ENCODE measurements at regions of chr6 and their contacts with region 1.

Region 1: DNA sequence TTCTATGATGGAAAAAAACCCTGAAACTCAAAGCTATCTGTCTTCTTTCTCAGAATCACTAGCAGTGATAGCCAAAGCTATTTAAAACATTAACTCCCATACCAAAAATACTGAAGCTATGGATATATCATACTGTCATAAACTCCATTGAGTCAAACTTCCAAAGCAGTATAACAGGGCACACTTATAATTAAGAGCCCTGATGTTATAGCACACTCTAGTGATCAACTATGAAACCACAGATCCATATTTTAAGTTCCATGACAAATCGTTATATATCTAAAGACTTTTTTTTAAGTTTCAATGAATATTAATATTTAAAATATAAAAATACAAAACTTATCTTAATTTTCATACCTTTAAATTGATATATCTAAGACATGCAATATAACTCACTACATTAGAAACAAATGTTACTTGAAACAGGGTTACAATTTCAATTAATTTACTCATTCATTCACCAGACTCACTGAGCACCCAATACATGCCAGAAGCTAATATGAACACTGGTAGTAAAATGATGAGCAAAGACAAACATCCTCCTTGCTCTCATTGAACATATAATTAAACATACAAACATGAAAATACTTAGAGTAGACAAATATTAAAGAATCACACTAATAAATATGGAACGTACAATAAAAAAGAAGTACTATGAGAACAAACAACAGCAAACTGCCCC is 69.3 kb downstream of the IBTK start:
- DNase-seq: no peak
- ATAC-seq: peak; percentile 50; the same call in 1 of the 2 replicates
- H3K4me3 ChIP-seq: no peak overlapping the region
- H3K27ac ChIP-seq: no peak overlapping the region
- H3K4me1 ChIP-seq: no peaks in the 10 kb centered on the region; a peak in 1 of 4 replicates
- H3K27me3 ChIP-seq: no peaks in the 10 kb centered on the region
- CTCF ChIP-seq: peak; percentile 25 to 50 (median 32); a peak in 3 of 6 replicates
- POLR2A ChIP-seq: no peak
- RAD21 ChIP-seq: peak; percentile 67

Region 2: DNA sequence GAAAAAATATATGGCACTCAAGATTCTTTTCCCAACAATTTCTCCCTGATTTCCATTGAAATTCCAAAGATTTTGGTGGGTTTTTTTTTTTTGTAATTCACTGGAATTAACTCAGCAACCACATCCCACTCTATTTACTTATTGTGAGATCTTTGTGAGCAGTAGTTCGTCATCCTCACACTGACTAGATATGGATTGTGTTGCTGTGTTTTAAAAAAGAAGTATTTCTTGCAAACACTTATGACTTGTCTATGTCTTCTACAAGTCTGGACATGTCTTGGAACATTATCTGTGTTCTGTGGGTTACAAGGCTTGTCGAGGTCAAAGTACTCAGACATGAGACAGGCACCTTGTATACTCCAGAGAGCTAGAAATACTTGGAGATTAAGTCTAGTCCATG is 418.4 kb before region 1 on chr6:
- CTCF ChIA-PET with region 1: no interaction called
- POLR2A ChIA-PET with region 1: no interaction called
- RAD21 ChIA-PET with region 1: no interaction called
- intact Hi-C with region 1: loop called (anchors 5 kb)
- DNase-seq: no peak
- ATAC-seq: no peak
- H3K4me3 ChIP-seq: no peak overlapping the region
- H3K27ac ChIP-seq: no peak overlapping the region
- H3K4me1 ChIP-seq: peaks cover 0 to 6% of the 10 kb centered on the region in 2 experiments; a peak in 1 of 4 replicates
- H3K27me3 ChIP-seq: no peaks in the 10 kb centered on the region
- CTCF ChIP-seq: no peak
- POLR2A ChIP-seq: no peak
- RAD21 ChIP-seq: no peak

Region 3: DNA sequence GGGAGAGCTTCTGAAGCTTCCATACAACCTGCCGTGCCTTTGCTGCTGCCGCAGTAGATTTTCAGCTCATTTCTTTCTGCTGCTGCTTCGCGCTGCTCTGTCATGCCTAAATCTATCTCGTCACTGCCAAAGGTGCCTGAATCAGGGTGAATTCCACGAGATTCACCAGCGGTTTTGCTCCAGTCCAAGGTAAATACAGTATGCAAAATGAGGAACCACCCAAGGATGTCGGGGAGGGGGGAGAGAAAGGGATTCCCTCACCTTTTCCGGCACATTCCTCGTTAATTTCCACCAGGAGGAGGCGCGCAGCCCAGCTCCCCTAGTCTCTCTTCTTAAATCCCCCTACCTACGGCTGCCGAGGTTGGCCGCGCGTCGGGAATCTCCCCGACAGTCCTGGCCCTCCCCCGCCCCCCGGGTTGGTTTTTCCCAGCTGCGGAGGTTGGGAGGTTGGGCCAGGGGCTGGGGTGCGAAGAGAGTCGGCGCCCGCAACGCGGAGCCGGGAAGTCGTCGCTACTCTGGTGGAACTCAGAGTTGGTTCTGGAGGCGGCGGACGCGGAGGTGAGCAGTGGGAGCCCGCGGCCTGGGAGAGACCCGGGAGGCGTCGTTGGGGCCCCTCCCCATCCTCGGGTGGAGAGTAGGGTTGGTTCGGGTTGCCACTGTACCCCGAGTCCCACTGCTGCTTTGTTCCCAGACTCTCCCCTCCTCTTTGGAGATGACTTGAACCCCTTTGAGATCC is 185.3 kb after region 1 on chr6 and contains the start of gene TPBG:
- CTCF ChIA-PET with region 1: no interaction called
- POLR2A ChIA-PET with region 1: no interaction called
- RAD21 ChIA-PET with region 1: no interaction called
- intact Hi-C with region 1: no loop called
- DNase-seq: peak; percentile 47
- ATAC-seq: peak; percentile 74
- H3K4me3 ChIP-seq: peak within 1 kb of the TSS; percentile 82 to 87
- H3K27ac ChIP-seq: peak within 1 kb of the TSS; percentile 92
- H3K4me1 ChIP-seq: peaks cover 12 to 19% of the 10 kb centered on the region in 2 experiments; a peak in 3 of 4 replicates
- H3K27me3 ChIP-seq: no peaks in the 10 kb centered on the region
- CTCF ChIP-seq: peak in 2 of 3 experiments; percentile 34 to 37; a peak in 2 of 6 replicates
- POLR2A ChIP-seq: peak; percentile 38
- RAD21 ChIP-seq: no peak; the same call in 1 of the 2 replicates
- total RNA-seq, gene TPBG: 28.4 TPM

Region 4: DNA sequence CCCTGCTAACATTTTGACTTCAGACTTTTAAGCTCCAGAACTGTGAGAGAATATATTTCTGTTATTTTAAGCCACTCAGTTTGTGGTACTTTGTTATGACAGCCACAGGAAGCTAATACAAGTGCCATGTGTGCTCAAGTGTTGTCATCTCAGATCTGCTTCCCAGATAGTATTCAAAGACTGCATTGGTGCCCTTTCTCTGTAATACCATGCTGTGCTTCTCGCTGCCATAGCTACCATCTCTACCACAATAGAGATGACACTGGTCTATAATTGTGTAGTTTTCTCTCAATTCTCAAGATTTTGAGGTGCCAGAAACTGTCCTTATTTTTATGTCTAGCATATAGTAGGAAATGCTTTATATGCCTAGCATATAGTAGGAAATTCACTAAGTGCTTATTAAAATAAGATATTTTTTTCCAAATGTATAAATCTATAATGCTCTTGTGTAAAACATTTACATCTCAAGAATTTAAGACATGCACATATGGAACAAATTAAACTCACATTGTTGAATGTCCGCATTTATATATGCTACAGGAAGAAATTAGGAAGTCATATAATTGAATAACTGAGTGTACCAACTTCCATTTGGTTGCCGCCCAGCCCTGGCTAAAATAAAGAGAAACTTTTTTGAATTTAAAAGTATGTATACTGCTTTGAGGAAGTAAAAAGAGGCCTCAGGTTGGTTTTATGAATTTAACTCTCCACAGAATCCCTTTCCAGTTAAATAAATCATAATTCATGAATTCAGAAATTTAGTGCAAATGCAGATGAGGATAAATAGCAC is 263.0 kb after region 1 on chr6:
- CTCF ChIA-PET with region 1: no interaction called
- POLR2A ChIA-PET with region 1: no interaction called
- RAD21 ChIA-PET with region 1: no interaction called
- intact Hi-C with region 1: no loop called
- DNase-seq: no peak
- ATAC-seq: no peak
- H3K4me3 ChIP-seq: no peak overlapping the region
- H3K27ac ChIP-seq: no peak overlapping the region
- H3K4me1 ChIP-seq: no peaks in the 10 kb centered on the region
- H3K27me3 ChIP-seq: no peaks in the 10 kb centered on the region
- CTCF ChIP-seq: no peak
- POLR2A ChIP-seq: no peak
- RAD21 ChIP-seq: no peak

Measured in HCT116 (cell line).